Posterior vena cava (tissue), 2 donors: ENCODE measurements at regions of chr15 and their contacts with region 1.

Region 1: DNA sequence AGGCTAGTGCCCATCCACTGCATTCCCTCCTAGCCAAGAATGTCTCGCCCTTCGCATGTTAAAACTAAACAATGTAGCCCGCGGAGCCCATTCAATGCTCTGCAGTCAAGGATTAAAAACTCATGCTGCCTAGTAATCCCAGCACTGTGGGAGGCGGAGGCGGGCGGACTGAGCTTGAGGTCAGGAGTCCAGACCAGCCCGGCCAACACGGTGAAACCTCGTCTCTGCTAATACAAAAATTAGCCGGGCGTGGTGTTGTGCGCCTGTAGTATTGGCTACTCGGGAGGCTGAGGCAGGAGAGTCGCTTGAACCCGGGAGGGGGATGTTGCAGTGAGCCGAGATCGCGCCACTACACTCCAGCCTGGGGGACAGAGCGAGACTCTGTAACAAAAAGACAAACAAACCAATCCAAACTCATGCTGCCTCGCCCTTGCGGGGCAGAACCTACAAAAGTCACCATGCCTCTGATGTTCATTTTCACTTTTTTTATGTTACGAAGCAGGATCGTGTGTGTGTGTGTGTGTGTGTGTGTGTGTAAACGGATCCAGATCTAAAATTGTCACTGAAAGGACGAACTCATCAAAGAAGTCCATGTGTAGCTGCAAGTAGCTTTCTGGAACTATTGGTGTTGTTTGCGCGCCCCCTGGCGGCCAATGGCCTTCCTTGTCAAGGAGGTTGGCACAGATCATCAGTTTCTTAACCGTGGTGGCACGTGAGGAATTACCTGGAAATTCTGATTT is 54.8 kb upstream of the SPESP1 start:
- DNase-seq: peak; percentile 98

Region 2: GRCh38 chr15:68550481-68551295 is 324.9 kb before region 1 on chr15:
- intact Hi-C with region 1: loop called (anchors 5 kb)
- DNase-seq: peak; percentile 89

Region 3: DNA sequence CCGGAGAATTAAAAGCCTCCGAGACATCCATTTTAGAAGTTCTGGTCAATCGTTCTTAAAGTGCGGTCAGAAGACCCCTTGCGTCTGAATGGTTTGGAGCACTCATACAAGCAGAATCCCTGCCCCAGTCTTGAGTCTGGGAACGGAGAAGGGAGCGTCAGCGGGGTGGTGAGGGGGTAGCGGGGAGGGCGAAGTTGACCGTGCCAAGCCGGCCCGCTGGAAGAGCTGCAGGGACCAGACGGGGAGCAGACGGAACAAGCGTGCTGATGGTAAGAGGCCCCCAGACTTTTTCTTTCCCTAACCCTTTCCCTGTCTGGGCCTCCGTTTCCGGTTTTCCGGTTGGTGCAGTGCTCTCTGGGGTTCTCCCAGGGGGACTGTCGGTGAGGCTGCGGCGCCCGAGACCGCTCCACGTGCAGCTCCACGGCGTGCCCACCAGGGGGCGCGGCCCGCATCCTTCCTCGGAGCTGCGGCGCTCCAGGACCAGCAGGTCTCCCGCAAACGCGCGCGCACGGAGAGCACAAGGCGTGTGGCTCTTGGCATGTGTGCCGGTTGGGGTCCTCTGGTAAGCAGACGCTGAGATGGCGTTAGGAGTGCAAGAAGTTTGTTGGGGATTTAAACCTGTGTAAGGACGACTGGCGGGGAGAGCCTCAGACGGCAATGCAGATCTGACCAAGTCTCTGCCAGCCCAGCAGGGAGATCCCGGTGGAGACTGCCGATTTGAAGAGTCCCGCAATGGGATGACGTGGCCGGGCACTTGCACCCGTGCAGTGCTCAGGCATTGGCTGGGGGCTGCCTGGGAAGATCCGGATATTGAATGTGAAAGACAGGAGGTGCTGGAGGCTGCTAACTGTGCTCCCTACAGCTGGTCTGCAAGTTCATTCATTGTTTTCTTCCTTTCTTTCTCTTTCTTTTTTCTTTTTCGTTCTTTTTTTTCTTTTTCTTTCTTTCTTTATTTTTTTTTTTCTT is 315.9 kb before region 1 on chr15:
- intact Hi-C with region 1: loop called (anchors 5 kb)
- DNase-seq: peak; percentile 94

Region 4: GRCh38 chr15:68730471-68730919 is 145.1 kb before region 1 on chr15:
- intact Hi-C with region 1: loop called in 1 of 2 experiments (anchors 5 kb)
- DNase-seq: no peak

Region 5: GRCh38 chr15:69090197-69090948 is 214.8 kb after region 1 on chr15:
- intact Hi-C with region 1: no loop called
- DNase-seq: no peak